IMR-90 (cell line): ENCODE measurements at regions of chr4 and their contacts with region 1.

Region 1: GRCh38 chr4:152535903-152536544 is at the start of gene FBXW7:
- DNase-seq: peak; percentile 99
- ATAC-seq: peak; percentile 90
- H3K4me3 ChIP-seq: peak within 1 kb of the TSS; percentile 88
- H3K27ac ChIP-seq: peak within 1 kb of the TSS; percentile 76
- H3K4me1 ChIP-seq: peaks cover 3% of the 10 kb centered on the region; the same call in 1 of the 2 replicates
- H3K27me3 ChIP-seq: no peaks in the 10 kb centered on the region
- CTCF ChIP-seq: no peak
- POLR2A ChIP-seq: peak; percentile 87
- RAD21 ChIP-seq: no peak
- total RNA-seq, gene FBXW7: 27.4 and 64.7 TPM in 2 replicates

Region 2: GRCh38 chr4:152408514-152409327 is 127.3 kb before region 1 on chr4:
- CTCF ChIA-PET with region 1: no interaction called
- POLR2A ChIA-PET with region 1: no interaction called
- dilution Hi-C with region 1: no loop called
- in situ Hi-C with region 1: no loop called
- intact Hi-C with region 1: loop called (anchors 5 kb)
- DNase-seq: peak; percentile 50
- ATAC-seq: peak; percentile 79
- H3K4me3 ChIP-seq: no peak overlapping the region
- H3K27ac ChIP-seq: no peak overlapping the region
- H3K4me1 ChIP-seq: no peaks in the 10 kb centered on the region
- H3K27me3 ChIP-seq: no peaks in the 10 kb centered on the region
- CTCF ChIP-seq: peak; percentile 76
- POLR2A ChIP-seq: no peak
- RAD21 ChIP-seq: peak; percentile 71

Region 3: DNA sequence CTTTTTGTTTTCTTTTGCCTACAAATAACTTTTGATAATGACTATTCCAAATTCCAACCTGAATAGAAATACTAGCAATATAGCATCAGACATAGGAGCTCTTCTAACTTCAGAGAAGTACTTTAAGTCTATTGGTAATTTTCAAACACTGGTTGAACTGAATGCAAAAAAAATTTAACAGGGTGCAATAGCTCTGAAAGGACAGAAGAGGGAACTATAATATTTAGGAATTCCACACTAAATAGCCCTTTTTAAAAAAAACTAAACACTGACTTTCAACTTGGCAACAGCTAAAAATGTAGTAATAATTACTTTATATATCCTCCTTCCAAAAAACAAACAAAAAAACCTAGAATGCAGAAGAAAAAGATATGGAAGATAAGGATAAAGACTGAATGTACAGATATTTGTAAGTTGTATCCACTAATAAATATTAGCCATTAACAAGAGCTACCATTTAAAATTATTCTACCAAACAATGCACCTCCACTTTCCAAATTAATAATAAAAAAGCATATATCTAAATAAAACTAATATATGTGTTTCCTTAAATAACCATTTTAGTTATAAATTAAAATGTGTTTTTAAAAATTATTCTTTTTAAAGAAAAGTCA is 81.5 kb before region 1 on chr4:
- CTCF ChIA-PET with region 1: interaction called, 3 read pairs
- POLR2A ChIA-PET with region 1: no interaction called
- dilution Hi-C with region 1: no loop called
- in situ Hi-C with region 1: no loop called
- intact Hi-C with region 1: loop called (anchors 2 kb)
- DNase-seq: peak; percentile 46
- ATAC-seq: peak; percentile 66
- H3K4me3 ChIP-seq: no peak overlapping the region
- H3K27ac ChIP-seq: no peak overlapping the region
- H3K4me1 ChIP-seq: peaks cover 5% of the 10 kb centered on the region; the same call in 1 of the 2 replicates
- H3K27me3 ChIP-seq: no peaks in the 10 kb centered on the region
- CTCF ChIP-seq: peak; percentile 77
- POLR2A ChIP-seq: no peak
- RAD21 ChIP-seq: peak; percentile 67

Region 4: DNA sequence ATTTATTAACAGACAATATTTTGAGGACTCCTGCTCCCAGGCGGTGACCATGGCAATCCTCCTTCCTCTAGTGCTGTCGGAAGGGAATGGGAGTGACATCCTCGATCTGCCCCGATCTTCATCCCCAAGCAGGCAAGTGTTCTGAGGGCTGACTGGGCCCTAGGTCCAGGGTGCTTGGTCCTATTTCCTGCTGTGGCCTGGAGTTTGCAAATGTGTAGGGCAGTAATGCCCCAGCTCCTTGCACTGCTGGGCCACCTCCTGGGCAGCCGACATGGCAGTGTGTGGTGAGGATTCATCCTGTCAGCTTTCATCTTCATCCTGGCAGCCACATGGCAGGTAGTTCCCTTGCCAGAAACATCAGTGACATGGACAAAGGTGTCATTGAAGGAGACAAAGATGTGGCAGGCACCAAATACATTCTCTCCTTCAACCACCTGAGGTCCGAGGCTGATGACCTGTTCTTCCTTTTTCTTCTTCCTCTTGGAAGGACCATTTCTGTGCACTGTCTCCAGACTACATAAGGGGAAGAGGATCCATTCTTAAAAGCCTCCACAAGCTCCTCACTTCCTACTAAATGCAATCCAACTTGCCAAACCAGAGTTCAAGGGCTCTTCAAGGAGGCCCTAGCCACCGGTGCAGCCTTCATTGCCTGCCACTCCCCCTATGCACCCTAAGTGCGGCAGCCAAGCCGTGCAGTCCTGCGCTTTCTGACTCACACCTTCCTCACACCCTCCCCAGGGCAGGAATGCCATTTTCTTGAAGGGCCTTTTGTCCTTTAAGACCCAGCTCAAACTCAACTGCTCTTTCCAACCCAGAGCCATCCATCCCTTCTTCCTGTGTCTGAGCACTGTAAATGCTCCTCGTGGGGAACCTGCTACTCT is 78.1 kb after region 1 on chr4:
- CTCF ChIA-PET with region 1: no interaction called
- POLR2A ChIA-PET with region 1: no interaction called
- dilution Hi-C with region 1: no loop called
- in situ Hi-C with region 1: no loop called
- intact Hi-C with region 1: no loop called
- DNase-seq: no peak
- ATAC-seq: no peak
- H3K4me3 ChIP-seq: no peak overlapping the region
- H3K27ac ChIP-seq: no peak overlapping the region
- H3K4me1 ChIP-seq: no peaks in the 10 kb centered on the region
- H3K27me3 ChIP-seq: peaks cover 57% of the 10 kb centered on the region
- CTCF ChIP-seq: no peak
- POLR2A ChIP-seq: no peak
- RAD21 ChIP-seq: no peak

Region 5: GRCh38 chr4:152779513-152780266 is 243.7 kb after region 1 on chr4 and contains the starts of genes ARFIP1 and TIGD4:
- CTCF ChIA-PET with region 1: no interaction called
- POLR2A ChIA-PET with region 1: no interaction called
- dilution Hi-C with region 1: no loop called
- in situ Hi-C with region 1: no loop called
- intact Hi-C with region 1: loop called (anchors 1 kb)
- DNase-seq: peak; percentile 96
- ATAC-seq: peak; percentile 98
- H3K4me3 ChIP-seq: peak within 1 kb of the TSS; percentile 79
- H3K27ac ChIP-seq: peak within 1 kb of the TSS; percentile 70
- H3K4me1 ChIP-seq: no peaks in the 10 kb centered on the region
- H3K27me3 ChIP-seq: peaks cover 6% of the 10 kb centered on the region; the same call in 1 of the 2 replicates
- CTCF ChIP-seq: peak; percentile 12; the same call in 1 of the 2 replicates
- POLR2A ChIP-seq: peak; percentile 77
- RAD21 ChIP-seq: peak; percentile 21; the same call in 1 of the 2 replicates
- total RNA-seq, gene ARFIP1: 30.5 and 37.5 TPM in 2 replicates
- total RNA-seq, gene TIGD4: not detected in 2 replicates